ENCODE measurements at regions of chr1 and their contacts with region 1.

Region 1: DNA sequence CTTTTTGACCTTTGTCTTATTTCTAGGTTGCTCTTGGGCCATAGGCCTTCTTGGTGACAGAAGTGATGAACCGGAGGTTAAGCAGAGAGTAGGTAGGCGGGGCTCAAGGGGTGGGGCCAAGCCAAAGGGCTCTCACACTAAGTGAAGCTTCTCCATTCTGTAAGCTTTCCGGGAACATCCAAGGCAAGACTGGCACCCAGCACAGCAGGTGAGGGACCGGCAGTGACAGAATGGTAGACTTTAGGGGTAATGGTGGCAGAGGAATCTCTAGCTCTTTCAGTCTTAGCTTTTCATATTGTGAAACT is at the start of gene TNFAIP8L2:
- DNase-seq: peak; percentile 74
- H3K4me3 ChIP-seq: peak within 1 kb of the TSS in 3 of 4 donors; percentile 4 to 33 (median 12)
- H3K27ac ChIP-seq: peak within 1 kb of the TSS; percentile 47 to 63 (median 56)
- H3K4me1 ChIP-seq: peaks cover 0 to 9% (median 0%) of the 10 kb centered on the region in 4 donors
- H3K27me3 ChIP-seq: no peaks in the 10 kb centered on the region
- CTCF ChIP-seq: no peak
- EP300 ChIP-seq: no peak
- POLR2A ChIP-seq: no peak
- total RNA-seq, gene TNFAIP8L2: 2.0 to 5.2 (median 4.2) TPM

Region 2: GRCh38 chr1:150813058-150813707 is 343.3 kb before region 1 on chr1:
- in situ Hi-C with region 1: no loop called
- intact Hi-C with region 1: loop called (anchors 5 kb)
- DNase-seq: peak; percentile 80
- H3K4me3 ChIP-seq: no peak overlapping the region
- H3K27ac ChIP-seq: no peak overlapping the region
- H3K4me1 ChIP-seq: peaks cover 0 to 34% (median 9%) of the 10 kb centered on the region in 4 donors
- H3K27me3 ChIP-seq: no peaks in the 10 kb centered on the region
- CTCF ChIP-seq: peak; percentile 53 to 87 (median 77)
- EP300 ChIP-seq: no peak
- POLR2A ChIP-seq: no peak

Region 3: DNA sequence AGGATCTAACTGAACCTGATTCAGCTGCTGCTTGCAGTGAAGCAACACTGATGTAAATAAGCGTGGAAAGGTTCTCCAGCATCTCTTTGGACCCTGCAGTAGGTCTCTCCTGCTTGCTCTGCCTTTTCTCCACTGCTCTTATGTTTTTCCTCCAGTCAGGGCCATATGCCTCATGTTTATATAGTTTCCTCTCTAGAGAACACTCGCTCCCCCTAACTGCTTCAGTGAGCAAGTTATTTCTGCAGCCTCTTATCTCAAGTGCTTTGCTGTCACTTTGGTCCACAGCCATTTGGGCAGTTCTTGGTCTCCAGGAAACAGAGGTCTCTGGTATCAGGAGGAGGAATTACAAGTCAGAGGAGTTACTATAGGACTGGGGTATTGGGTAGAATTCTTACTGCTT is 142.9 kb before region 1 on chr1:
- in situ Hi-C with region 1: loop called in 1 of 4 experiments (anchors 10 kb)
- intact Hi-C with region 1: no loop called
- DNase-seq: no peak
- H3K4me3 ChIP-seq: no peak overlapping the region
- H3K27ac ChIP-seq: peak overlapping the region; percentile 65 to 80 (median 77)
- H3K4me1 ChIP-seq: peaks cover 19 to 65% (median 35%) of the 10 kb centered on the region in 4 donors
- H3K27me3 ChIP-seq: no peaks in the 10 kb centered on the region
- CTCF ChIP-seq: no peak
- EP300 ChIP-seq: no peak
- POLR2A ChIP-seq: no peak

Region 4: GRCh38 chr1:151024540-151025146 is 131.8 kb before region 1 on chr1:
- in situ Hi-C with region 1: loop called in 3 of 4 experiments (anchors 10 to 25 kb)
- intact Hi-C with region 1: no loop called
- DNase-seq: peak; percentile 85
- H3K4me3 ChIP-seq: no peak overlapping the region
- H3K27ac ChIP-seq: peak overlapping the region in 2 of 4 donors; percentile 13 to 52
- H3K4me1 ChIP-seq: peaks cover 0 to 8% (median 0%) of the 10 kb centered on the region in 4 donors
- H3K27me3 ChIP-seq: no peaks in the 10 kb centered on the region
- CTCF ChIP-seq: peak; percentile 70 to 75 (median 72)
- EP300 ChIP-seq: no peak
- POLR2A ChIP-seq: no peak

Region 5: DNA sequence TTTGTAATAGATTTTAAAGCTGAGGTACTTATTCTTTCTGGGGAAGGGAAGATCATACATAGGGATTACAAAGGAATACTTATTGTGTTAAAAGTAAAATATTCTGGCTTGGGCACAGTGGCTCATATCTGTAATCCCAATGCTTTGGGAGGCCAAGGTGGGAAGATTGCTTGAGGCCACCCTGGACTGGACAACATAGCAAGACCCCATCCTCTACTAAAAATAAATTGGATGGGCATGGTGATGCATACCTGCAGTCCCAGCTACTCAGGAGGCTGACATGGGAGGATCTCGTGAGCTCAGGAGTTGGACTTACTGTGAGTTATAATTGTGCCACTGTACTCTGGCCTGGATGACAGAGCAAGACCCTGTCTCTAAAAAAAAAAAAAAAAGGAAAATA is 58.3 kb before region 1 on chr1:
- in situ Hi-C with region 1: loop called in 2 of 4 experiments (anchors 5 to 10 kb)
- intact Hi-C with region 1: loop called (anchors 10 kb)
- DNase-seq: no peak
- H3K4me3 ChIP-seq: no peak overlapping the region
- H3K27ac ChIP-seq: no peak overlapping the region
- H3K4me1 ChIP-seq: no peaks in the 10 kb centered on the region
- H3K27me3 ChIP-seq: no peaks in the 10 kb centered on the region
- CTCF ChIP-seq: no peak
- EP300 ChIP-seq: no peak
- POLR2A ChIP-seq: no peak

Region 6: DNA sequence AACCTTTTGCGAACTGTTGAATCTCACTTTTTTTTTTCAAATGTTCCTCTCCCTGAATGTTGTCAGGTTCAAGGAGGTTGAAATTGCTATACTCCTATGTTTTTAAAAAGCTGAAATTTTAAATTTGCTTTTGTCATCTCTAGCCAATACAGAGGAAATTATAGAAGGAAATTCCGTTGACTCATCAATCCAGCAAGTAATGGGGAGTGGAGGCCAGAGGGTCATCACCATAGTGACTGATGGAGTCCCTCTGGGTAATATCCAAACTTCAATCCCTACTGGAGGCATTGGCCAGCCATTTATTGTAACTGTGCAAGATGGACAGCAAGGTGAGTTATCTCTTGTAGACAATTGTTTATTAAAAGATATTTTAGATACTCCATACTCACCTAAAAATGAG is 49.6 kb before region 1 on chr1:
- in situ Hi-C with region 1: no loop called
- intact Hi-C with region 1: loop called (anchors 10 kb)
- DNase-seq: no peak
- H3K4me3 ChIP-seq: no peak overlapping the region
- H3K27ac ChIP-seq: no peak overlapping the region
- H3K4me1 ChIP-seq: no peaks in the 10 kb centered on the region
- H3K27me3 ChIP-seq: no peaks in the 10 kb centered on the region
- CTCF ChIP-seq: no peak
- EP300 ChIP-seq: no peak
- POLR2A ChIP-seq: no peak

Region 7: DNA sequence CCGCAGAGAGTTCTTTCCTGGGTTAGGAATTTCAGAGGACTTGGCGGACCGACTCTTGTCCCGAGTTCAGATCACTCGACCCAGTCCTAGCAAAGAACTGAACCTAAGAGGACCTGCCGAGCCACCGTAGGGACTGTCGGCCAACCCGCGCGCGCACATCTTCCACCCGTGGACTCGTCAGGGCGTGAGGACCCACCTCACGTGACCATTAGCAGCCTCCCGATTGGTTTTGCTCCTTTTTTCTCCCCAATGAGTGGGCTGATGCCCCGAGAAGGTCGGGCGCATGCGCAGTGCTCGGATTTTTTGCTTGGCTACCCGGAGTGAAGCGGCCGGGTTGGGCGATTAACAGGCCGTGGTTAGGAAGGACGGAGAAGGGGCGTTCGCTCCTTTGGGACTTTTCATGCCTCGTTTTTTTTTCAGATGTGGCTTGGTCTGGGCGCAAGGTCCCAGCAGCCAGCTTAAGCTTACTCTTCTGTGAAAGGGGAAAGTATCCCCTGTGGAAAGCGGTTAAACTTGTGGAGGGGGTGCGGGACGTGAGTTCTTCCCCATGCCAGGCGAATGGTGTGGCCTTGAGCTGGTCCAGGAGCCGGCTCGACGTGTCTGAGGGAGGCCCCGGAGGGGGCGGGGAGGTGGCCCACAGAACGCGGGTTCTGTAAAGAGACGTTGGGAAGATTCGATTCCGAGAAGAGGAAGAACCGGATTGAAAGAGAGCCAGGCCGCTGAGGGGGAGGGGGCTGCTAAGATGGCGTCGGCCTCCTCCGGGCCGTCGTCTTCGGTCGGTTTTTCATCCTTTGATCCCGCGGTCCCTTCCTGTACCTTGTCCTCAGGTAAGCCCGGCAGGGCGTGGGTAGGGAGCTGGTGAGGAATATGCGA is 42.0 kb after region 1 on chr1 and contains the start of gene PIP5K1A:
- in situ Hi-C with region 1: no loop called
- intact Hi-C with region 1: no loop called
- DNase-seq: peak; percentile 98
- H3K4me3 ChIP-seq: peak within 1 kb of the TSS; percentile 75 to 93 (median 78)
- H3K27ac ChIP-seq: peak within 1 kb of the TSS; percentile 95 to 99 (median 96)
- H3K4me1 ChIP-seq: peaks cover 12 to 54% (median 39%) of the 10 kb centered on the region in 4 donors
- H3K27me3 ChIP-seq: no peaks in the 10 kb centered on the region
- CTCF ChIP-seq: no peak
- EP300 ChIP-seq: no peak
- POLR2A ChIP-seq: peak; percentile 92
- total RNA-seq, gene PIP5K1A: 46.7 to 78.2 (median 59.4) TPM

Measured in transverse colon (tissue), 4 donors.